ENCODE measurements at regions of chr2 and their contacts with region 1.

Region 1: GRCh38 chr2:223993621-223994232 is 36.5 kb downstream of the MRPL44 start:
- DNase-seq: peak in 7 of 10 donors; percentile 40 to 80 (median 57)
- H3K4me3 ChIP-seq: no peak overlapping the region
- H3K27ac ChIP-seq: peak overlapping the region in 2 of 59 donors; percentile 14 to 27
- H3K27me3 ChIP-seq: no peaks in the 10 kb centered on the region
- CTCF ChIP-seq: peak; percentile 71 to 95 (median 90)

Region 2: GRCh38 chr2:224165901-224166319 is 172.2 kb after region 1 on chr2:
- intact Hi-C with region 1: no loop called
- DNase-seq: no peak
- H3K4me3 ChIP-seq: no peak overlapping the region
- H3K27ac ChIP-seq: no peak overlapping the region
- H3K27me3 ChIP-seq: no peaks in the 10 kb centered on the region
- CTCF ChIP-seq: no peak

Region 3: DNA sequence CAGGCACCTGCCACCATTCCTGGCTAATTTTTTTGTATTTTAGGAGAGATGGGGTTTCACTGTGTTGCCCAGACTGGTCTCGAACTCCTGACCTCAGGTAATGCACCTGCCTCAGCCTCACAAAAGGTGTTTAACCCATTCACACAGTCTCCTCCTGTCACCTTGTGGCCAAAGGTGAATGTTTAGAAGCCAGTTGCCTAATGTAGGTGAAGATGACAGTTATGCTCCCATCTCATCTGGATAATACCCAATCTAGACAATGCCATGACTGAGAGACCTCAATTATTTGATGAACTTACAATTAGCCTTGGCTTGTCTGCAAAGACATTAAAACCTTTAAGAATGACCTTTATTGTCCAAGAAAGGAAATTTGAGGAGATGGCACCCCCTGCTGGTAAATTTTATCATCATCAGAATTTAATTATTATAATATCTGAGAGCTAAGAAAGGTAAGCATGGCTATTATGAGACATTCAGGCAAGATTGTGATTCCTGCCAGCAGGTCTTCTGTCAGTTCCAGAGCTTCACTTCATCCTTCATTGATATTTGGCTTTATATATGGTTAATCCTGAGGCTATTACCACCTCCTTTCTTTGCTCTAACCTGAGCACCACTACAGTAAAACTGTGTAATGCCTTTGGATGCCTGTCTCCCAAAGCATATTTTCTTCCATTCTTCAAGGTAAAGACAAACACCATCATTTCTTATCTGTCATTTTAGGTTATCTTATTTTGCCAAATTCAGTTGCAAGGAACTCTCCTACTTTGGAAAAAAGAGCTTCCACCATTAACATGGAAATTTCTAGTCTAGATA is 290.6 kb after region 1 on chr2:
- intact Hi-C with region 1: loop called (anchors 1 to 2 kb)
- DNase-seq: no peak
- H3K4me3 ChIP-seq: no peak overlapping the region
- H3K27ac ChIP-seq: no peak overlapping the region
- H3K27me3 ChIP-seq: no peaks in the 10 kb centered on the region
- CTCF ChIP-seq: peak; percentile 63 to 95 (median 82)

Region 4: DNA sequence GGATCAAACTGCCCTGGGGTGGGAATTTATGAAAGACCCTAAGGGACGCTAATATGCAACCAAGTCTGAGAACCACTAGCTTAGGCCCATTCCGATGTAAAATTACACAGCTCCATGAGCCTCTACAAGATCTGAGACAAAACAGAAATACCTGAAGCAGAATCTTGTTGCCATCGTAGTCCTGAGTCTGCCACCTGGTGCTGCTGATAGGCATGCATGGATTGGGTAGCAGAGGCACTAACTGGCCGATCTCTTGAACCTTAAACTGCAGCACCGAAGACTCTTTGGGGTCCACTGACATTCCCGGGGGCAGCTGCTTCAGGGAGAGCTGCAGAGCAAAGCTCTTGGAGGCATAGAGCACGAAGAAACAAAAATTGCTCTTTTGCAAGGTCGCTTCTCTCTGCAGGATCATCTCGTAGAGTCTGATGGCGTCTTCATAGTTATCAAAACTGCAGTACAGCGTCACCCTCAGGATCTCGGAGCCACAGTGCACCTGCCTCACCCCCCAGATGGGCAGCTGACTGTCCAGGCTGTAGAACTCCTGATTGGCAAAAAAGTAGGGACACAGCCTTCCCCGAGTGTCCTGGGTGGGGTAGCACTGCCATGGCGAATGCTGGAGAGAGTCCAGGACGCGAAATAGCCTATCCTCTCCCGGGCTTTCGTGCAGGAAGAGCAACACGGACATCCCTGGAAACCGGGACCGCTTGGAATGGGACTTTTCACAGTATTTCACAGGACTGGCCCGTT is 407.3 kb after region 1 on chr2:
- intact Hi-C with region 1: no loop called
- DNase-seq: no peak
- H3K4me3 ChIP-seq: peak overlapping the region in 55 of 59 donors; percentile 0 to 59 (median 37)
- H3K27ac ChIP-seq: peak overlapping the region in 4 of 59 donors; percentile 9 to 41 (median 16)
- H3K27me3 ChIP-seq: no peaks in the 10 kb centered on the region
- CTCF ChIP-seq: no peak

Region 5: GRCh38 chr2:224650815-224651439 is 657.2 kb after region 1 on chr2:
- intact Hi-C with region 1: loop called in 1 of 2 experiments (anchors 10 kb)
- DNase-seq: no peak
- H3K4me3 ChIP-seq: peak overlapping the region in 16 of 59 donors; percentile 10 to 43 (median 26)
- H3K27ac ChIP-seq: no peak overlapping the region
- H3K27me3 ChIP-seq: peaks cover 0 to 2% (median 0%) of the 10 kb centered on the region in 45 donors
- CTCF ChIP-seq: peak; percentile 72 to 96 (median 85)

Measured in dorsolateral prefrontal cortex (tissue), 120 donors.